ENCODE measurements at regions of chr9 and their contacts with region 1.

Region 1: GRCh38 chr9:112086627-112087026 is 88.5 kb downstream of the SUSD1 start:
- DNase-seq: peak in 1 of 4 experiments; percentile 29
- ATAC-seq: 0 out of 3 replicates have a peak, but pooled peaks have one; percentile 27
- H3K4me3 ChIP-seq: no peak overlapping the region
- H3K27ac ChIP-seq: no peak overlapping the region
- H3K4me1 ChIP-seq: no peaks in the 10 kb centered on the region
- H3K27me3 ChIP-seq: no peaks in the 10 kb centered on the region
- CTCF ChIP-seq: peak in 2 of 3 experiments; percentile 40 to 70; a peak in 4 of 6 replicates
- EP300 ChIP-seq: no peak
- POLR2A ChIP-seq: no peak
- RAD21 ChIP-seq: peak; percentile 30 to 58; a peak in 2 of 4 replicates

Region 2: DNA sequence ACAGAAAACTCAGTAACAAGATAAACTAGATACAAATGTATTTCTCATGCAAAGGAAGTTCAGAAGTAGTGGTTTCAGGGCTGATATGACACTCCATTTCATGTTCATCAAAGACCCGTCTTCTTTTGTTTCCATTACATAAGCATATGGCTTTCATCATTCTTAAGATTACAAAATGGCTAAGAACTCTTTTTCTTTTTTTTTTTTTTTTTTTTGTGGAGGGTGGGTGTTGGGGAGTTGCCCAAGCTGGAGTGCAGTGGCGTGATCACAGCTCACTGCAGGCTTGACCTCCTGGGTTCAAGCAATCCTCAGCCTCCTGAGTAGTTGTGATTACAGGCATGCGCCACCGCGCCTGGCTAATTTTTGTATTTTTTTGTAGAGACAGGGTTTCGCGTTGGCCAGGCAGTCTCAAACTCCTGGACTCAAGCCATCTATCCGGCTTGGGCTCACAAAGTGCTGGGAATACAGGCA is 268.8 kb after region 1 on chr9:
- CTCF ChIA-PET with region 1: interaction called, 26 read pairs
- POLR2A ChIA-PET with region 1: interaction called, 3 read pairs
- in situ Hi-C with region 1: loop called (anchors 5 kb)
- intact Hi-C with region 1: loop called (anchors 2 kb)
- DNase-seq: no peak
- ATAC-seq: peak; percentile 53; the same call in 2 of the 3 replicates
- H3K4me3 ChIP-seq: no peak overlapping the region
- H3K27ac ChIP-seq: no peak overlapping the region
- H3K4me1 ChIP-seq: no peaks in the 10 kb centered on the region
- H3K27me3 ChIP-seq: no peaks in the 10 kb centered on the region
- CTCF ChIP-seq: no peak
- EP300 ChIP-seq: no peak
- POLR2A ChIP-seq: no peak
- RAD21 ChIP-seq: no peak

Region 3: DNA sequence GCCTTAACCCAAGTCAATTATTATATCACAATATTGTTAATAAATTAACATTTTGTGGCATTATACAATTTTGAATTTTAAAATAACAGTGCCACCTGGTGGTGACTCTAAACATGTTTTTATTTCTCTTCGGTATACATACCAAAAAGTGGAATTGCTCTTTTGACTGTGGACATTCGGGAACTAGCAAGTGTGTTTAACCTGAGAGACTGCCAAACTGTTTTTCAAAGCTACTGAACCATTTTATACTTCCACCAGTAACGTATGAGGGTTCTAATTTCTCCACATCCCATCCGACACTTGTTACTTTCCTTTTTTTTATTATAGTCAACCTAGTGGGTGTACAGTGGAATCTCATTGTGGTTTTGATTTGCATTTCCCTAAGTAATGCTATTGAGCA is 275.0 kb after region 1 on chr9:
- CTCF ChIA-PET with region 1: interaction called, 26 read pairs
- POLR2A ChIA-PET with region 1: interaction called, 3 read pairs
- in situ Hi-C with region 1: no loop called
- intact Hi-C with region 1: loop called (anchors 2 kb)
- DNase-seq: peak in 2 of 4 experiments; percentile 18 to 59
- ATAC-seq: peak; percentile 80
- H3K4me3 ChIP-seq: no peak overlapping the region
- H3K27ac ChIP-seq: no peak overlapping the region
- H3K4me1 ChIP-seq: no peaks in the 10 kb centered on the region
- H3K27me3 ChIP-seq: no peaks in the 10 kb centered on the region
- CTCF ChIP-seq: peak; percentile 34 to 72 (median 36); a peak in 3 of 6 replicates
- EP300 ChIP-seq: no peak
- POLR2A ChIP-seq: no peak
- RAD21 ChIP-seq: peak; percentile 68 to 88

Region 4: DNA sequence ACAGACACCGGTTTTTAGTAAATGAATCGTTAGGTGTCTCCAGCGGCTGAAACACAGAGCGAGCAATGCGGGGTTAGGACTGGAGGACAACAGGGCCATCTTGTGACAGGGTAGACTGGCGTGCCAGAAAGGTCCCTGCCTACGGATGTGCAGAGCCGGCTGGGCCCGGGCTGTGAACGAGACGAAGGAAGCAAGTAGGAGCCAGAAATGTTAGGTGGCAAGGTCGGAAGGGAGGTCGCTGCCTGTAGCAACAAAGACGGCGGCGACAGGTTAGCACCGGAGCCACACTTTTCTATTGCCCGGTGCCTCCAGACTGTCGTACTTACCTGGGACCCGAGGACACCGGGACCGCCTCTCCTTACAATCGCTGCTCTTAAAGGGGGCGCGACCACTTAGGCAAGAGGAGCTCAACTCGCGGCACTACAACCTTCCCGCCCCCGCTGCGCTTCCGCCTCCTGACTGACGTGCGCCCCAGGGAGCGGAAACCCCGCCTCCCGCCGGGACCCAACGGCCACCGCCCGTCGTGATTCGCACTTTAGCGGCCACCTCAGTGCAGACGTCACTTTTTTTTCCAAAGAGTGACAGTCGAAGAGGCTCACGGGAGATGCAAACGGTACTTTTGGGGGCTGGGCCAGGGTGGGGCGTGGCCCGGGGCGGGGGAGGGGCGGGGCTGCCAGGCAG is 631.2 kb after region 1 on chr9 and contains the start of gene INIP:
- CTCF ChIA-PET with region 1: no interaction called
- POLR2A ChIA-PET with region 1: no interaction called
- in situ Hi-C with region 1: no loop called
- intact Hi-C with region 1: loop called (anchors 10 kb)
- DNase-seq: peak; percentile 95 to 98 (median 96)
- ATAC-seq: peak; percentile 98
- H3K4me3 ChIP-seq: peak within 1 kb of the TSS; percentile 79
- H3K27ac ChIP-seq: peak within 1 kb of the TSS; percentile 91
- H3K4me1 ChIP-seq: peaks cover 0 to 6% of the 10 kb centered on the region in 2 experiments; a peak in 3 of 5 replicates
- H3K27me3 ChIP-seq: no peaks in the 10 kb centered on the region
- CTCF ChIP-seq: peak; percentile 32 to 64 (median 52); a peak in 4 of 6 replicates
- EP300 ChIP-seq: no peak
- POLR2A ChIP-seq: peak; percentile 91
- RAD21 ChIP-seq: peak; percentile 30 to 52
- polyA plus RNA-seq, gene INIP: 87.0 to 87.9 TPM